Right ventricle myocardium inferior (tissue), 1 donor: ENCODE measurements at regions of chr11 and their contacts with region 1.

Region 1: DNA sequence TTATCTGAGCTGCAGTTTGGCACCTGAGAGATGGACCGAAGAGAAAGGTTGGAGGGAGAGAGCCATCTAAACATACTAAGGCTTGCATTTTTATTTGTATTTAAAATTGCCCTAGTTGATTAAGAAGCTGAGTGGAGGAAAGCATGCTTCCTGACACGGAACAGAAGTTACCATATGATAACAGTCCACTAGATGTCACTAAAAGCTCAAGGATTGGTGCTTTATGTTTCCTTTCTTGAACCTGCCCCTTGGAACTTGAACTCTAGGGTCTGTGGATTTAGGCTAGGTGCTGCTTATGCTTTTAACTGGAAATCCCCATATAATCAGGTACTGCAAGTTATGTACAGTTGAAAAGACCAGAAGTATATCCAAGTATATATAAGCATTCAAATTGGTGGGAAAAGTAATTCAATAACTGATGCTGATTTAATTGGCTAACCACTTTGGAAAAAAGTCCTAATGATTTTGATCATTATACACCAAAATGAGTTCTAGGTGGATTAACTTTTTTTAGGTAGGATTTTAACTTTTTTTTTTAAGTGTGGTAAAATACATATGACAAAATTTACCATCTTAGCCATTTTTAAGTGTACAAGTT is 9.5 kb downstream of the RBMXL2 start:
- DNase-seq: no peak
- ATAC-seq: peak; percentile 42

Region 2: GRCh38 chr11:7079545-7080135 is 18.7 kb before region 1 on chr11:
- intact Hi-C with region 1: no loop called
- DNase-seq: no peak
- ATAC-seq: no peak

Region 3: GRCh38 chr11:7222619-7223018 is 124.3 kb after region 1 on chr11:
- intact Hi-C with region 1: no loop called
- DNase-seq: no peak
- ATAC-seq: no peak

Region 4: GRCh38 chr11:7348432-7349304 is 250.3 kb after region 1 on chr11:
- intact Hi-C with region 1: no loop called
- DNase-seq: no peak
- ATAC-seq: peak; percentile 46

Region 5: DNA sequence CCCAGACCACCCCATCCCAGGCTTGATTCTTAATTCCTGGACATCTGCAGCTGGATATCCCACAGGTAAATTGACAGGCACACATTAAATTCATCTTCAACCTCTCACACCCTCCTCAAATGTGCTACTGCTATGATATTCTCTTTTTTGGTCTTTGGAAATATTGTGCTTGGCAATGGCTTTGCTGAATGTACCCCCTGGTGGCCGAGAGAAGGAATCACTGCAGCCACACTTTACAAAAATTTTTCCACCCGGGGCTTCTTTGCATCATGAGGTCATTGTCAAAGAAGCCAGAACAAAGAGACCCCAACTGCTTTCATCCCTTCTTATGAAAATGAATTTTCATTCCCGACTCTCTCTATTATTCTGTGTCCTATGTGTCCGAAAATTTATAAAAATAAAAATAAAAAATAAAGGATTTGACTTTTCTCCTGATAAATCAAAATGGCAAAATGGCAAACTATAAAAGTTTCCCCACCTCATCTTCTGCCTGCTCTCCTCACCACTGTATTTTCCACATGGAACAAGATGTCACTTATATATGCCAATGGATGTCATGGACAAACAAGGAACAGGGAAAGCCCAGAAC is 590.0 kb after region 1 on chr11:
- intact Hi-C with region 1: loop called (anchors 5 kb)
- DNase-seq: no peak
- ATAC-seq: no peak

Region 6: GRCh38 chr11:7986768-7987559 is 888.6 kb after region 1 on chr11 and contains the start of gene EIF3F:
- intact Hi-C with region 1: loop called (anchors 2 kb)
- DNase-seq: peak; percentile 89
- ATAC-seq: peak; percentile 100
- total RNA-seq, gene EIF3F: 155 TPM